A549 (cell line): ENCODE measurements at regions of chr17 and their contacts with region 1.

Region 1: GRCh38 chr17:81294856-81295680 is at the start of gene SLC38A10:
- DNase-seq: peak; percentile 87 to 100
- ATAC-seq: peak; percentile 94 to 95
- H3K4me3 ChIP-seq: peak within 1 kb of the TSS; percentile 74
- H3K27ac ChIP-seq: peak within 1 kb of the TSS; percentile 91 to 92
- H3K4me1 ChIP-seq: peaks cover 22% of the 10 kb centered on the region
- CTCF ChIP-seq: no peak; the same call in 2 of the 3 replicates
- EP300 ChIP-seq: no peak
- POLR2A ChIP-seq: peak; percentile 95
- RAD21 ChIP-seq: peak in 1 of 2 experiments; percentile 24; a peak in 1 of 5 replicates
- polyA plus RNA-seq, gene SLC38A10: 35.8 and 49.3 TPM in 2 replicates

Region 2: GRCh38 chr17:81207610-81208581 is 87.2 kb before region 1 on chr17:
- CTCF ChIA-PET with region 1: no interaction called
- POLR2A ChIA-PET with region 1: no interaction called
- DNase-seq: no peak
- ATAC-seq: no peak
- H3K4me3 ChIP-seq: no peak overlapping the region
- H3K27ac ChIP-seq: no peak overlapping the region
- H3K4me1 ChIP-seq: no peaks in the 10 kb centered on the region
- CTCF ChIP-seq: no peak
- EP300 ChIP-seq: no peak
- POLR2A ChIP-seq: no peak
- RAD21 ChIP-seq: no peak

Region 3: DNA sequence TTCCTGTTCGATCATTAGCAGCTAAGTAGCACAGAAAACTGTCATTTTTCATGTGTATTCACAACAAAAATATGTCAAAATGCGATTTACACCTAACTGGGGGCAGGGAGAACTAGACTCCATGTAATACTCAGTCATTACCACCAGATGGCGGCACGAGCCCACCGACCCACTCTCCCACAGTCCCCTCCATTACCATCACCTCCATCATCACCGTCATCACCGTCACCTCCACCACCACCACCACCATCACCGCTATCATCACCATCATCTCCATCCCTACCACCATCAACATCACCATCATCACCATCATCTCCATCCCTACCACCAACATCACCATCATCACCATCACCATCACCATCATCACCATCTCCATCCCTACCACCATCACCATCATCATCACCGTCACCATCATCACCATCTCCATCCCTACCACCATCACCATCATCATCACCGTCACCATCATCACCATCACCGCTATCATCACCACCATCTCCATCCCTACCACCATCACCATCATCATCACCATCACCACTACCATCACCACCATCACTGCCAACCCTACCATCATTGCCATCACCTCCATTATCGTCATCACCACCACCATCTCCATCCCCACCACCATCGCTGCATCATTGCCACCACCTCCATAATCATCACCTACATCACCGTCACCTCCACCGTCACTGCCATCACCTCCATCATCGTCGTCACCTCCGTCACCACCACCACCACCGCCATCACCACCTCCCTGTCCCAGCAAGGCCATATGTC is 41.5 kb before region 1 on chr17:
- CTCF ChIA-PET with region 1: interaction called, 18 read pairs
- POLR2A ChIA-PET with region 1: no interaction called
- DNase-seq: peak; percentile 43 to 62
- ATAC-seq: peak; percentile 12 to 47; a peak in 3 of 6 replicates
- H3K4me3 ChIP-seq: no peak overlapping the region
- H3K27ac ChIP-seq: no peak overlapping the region
- H3K4me1 ChIP-seq: peaks cover 18% of the 10 kb centered on the region
- CTCF ChIP-seq: peak; percentile 92
- EP300 ChIP-seq: no peak
- POLR2A ChIP-seq: no peak
- RAD21 ChIP-seq: peak; percentile 95 to 98

Region 4: DNA sequence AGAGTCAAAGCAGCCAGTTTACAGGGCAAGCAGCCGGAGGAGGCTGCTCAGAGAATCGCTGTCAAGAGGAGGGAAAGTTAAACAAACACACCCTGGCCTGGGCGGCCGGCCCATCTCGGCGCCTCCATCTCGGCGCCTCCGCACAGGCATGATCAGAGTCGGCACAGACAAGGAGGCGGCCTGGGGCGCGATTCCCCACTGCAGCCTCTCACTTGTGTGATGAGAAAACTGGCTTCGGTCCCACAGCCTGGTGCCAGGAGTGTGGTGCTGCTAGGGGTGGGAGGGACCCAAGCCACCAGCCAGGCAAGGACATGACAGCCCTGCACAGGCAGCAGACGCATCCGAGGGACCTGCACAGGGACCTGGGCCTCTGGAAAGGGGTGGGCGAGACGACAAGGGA is 17.6 kb before region 1 on chr17:
- CTCF ChIA-PET with region 1: interaction called, 22 read pairs
- POLR2A ChIA-PET with region 1: interaction called, 3 read pairs
- DNase-seq: no peak
- ATAC-seq: no peak
- H3K4me3 ChIP-seq: no peak overlapping the region
- H3K27ac ChIP-seq: no peak overlapping the region
- H3K4me1 ChIP-seq: no peaks in the 10 kb centered on the region
- CTCF ChIP-seq: no peak
- EP300 ChIP-seq: no peak
- POLR2A ChIP-seq: no peak
- RAD21 ChIP-seq: no peak

Region 5: DNA sequence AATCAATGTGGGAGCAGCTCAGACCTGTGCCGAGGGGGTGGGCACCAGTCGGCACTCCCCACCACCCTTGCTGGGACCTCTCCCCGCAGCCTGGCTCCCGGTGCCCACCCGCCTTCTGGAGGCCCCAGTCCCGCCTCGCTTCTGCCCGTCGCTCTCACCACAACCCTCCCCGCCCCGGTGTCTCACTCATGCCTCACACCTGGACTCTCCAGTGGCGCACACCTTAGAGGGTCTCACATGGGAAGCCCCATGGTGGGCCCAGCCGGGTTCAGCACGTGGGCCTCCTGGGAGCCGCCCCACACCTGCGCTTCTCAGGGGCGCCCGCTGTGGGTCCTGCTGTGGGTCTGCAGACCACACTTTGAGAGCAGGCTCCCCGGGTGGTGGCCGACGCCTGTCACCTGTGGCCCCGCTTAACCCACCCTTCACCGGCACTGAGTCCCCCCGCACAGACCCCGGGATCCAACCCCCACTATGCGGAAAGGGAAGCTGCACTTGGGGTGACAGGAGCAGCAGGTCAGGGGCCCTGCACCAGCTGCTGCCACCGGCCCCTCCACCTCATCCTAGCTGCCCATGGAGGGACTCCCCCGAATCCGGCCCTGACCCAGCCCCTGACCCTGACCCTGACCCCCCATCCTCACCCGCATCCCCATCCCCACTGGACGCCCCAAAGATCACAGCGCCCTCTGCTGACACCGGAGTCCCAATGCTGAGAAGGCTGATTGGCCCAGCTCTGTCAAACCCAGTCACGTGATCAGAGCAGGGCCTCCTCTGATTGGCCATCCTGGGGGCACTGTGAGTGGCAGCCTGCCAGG is 27.4 kb after region 1 on chr17:
- CTCF ChIA-PET with region 1: interaction called, 20 read pairs
- POLR2A ChIA-PET with region 1: interaction called, 6 read pairs
- DNase-seq: peak; percentile 72 to 89
- ATAC-seq: peak; percentile 46 to 83; a peak in 5 of 6 replicates
- H3K4me3 ChIP-seq: no peak overlapping the region
- H3K27ac ChIP-seq: no peak overlapping the region
- H3K4me1 ChIP-seq: no peaks in the 10 kb centered on the region
- CTCF ChIP-seq: peak; percentile 30
- EP300 ChIP-seq: no peak
- POLR2A ChIP-seq: no peak
- RAD21 ChIP-seq: peak in 1 of 2 experiments; percentile 29; a peak in 2 of 5 replicates

Region 6: DNA sequence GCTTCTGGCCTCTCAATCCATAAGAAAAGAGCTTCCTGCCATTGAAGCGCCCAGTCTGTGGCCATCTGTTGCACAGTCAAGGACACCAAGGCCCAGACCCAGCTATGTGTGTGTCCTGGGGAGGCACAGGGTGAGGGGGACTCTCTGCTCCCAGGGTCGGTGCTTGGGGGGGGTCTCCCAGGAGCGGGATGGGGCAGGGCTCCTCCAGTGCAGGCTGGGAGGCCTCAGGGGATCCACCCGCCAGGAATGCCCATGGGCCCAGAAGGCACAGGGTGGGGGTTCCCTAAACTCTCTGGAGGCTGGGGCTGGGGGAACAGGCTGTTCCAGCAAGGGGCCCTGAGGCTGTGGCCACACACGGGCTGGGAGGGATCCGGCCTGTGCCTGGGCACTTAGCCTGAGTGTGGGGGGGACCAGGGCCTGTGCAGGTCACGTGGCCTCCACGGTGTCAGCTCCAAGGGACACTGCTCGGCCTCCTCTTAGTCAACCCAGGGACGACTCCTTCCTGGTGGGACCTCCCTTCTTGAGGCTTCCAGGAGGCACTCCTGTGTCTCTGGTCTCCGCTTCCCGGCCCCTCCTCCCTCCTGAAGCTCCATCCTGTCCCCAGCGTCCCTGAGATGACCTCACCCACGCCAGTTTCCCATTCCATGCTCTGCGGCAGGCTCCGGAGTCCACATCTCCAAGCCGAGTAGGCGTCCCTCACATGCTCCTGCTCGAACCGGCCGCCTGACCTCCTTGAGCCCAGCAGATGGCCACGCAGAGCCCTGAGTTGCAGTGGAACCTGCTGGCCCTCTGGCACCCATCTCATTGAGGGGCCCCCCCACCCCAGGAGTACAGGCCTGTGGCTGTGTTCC is 77.1 kb after region 1 on chr17:
- CTCF ChIA-PET with region 1: interaction called, 14 read pairs
- POLR2A ChIA-PET with region 1: interaction called, 3 read pairs
- DNase-seq: peak; percentile 73 to 77
- ATAC-seq: peak; percentile 91 to 95
- H3K4me3 ChIP-seq: no peak overlapping the region
- H3K27ac ChIP-seq: peak overlapping the region; percentile 19 to 36; a peak in 2 of 6 replicates
- H3K4me1 ChIP-seq: peaks cover 5% of the 10 kb centered on the region
- CTCF ChIP-seq: peak; percentile 55
- EP300 ChIP-seq: no peak
- POLR2A ChIP-seq: no peak
- RAD21 ChIP-seq: peak; percentile 69 to 71; a peak in 4 of 5 replicates

Region 7: GRCh38 chr17:81394921-81395599 is 100.0 kb after region 1 on chr17 and contains the start of gene BAHCC1:
- CTCF ChIA-PET with region 1: interaction called, 25 read pairs
- POLR2A ChIA-PET with region 1: interaction called, 5 read pairs
- DNase-seq: peak; percentile 99 to 100
- ATAC-seq: peak; percentile 65 to 85
- H3K4me3 ChIP-seq: peak within 1 kb of the TSS; percentile 76
- H3K27ac ChIP-seq: peak within 1 kb of the TSS; percentile 94 to 98
- H3K4me1 ChIP-seq: peaks cover 40% of the 10 kb centered on the region
- CTCF ChIP-seq: no peak
- EP300 ChIP-seq: no peak
- POLR2A ChIP-seq: peak; percentile 79
- RAD21 ChIP-seq: no peak
- polyA plus RNA-seq, gene BAHCC1: 2.1 and 2.6 TPM in 2 replicates

Region 8: GRCh38 chr17:81419328-81419885 is 124.3 kb after region 1 on chr17:
- CTCF ChIA-PET with region 1: interaction called, 12 read pairs
- POLR2A ChIA-PET with region 1: no interaction called
- DNase-seq: peak; percentile 92 to 97
- ATAC-seq: peak; percentile 67 to 84
- H3K4me3 ChIP-seq: peak overlapping the region; percentile 38
- H3K27ac ChIP-seq: peak overlapping the region; percentile 98 to 100
- H3K4me1 ChIP-seq: peaks cover 77% of the 10 kb centered on the region
- CTCF ChIP-seq: no peak
- EP300 ChIP-seq: peak; percentile 18 to 36; a peak in 1 of 5 replicates
- POLR2A ChIP-seq: peak; percentile 70
- RAD21 ChIP-seq: no peak; a peak in 1 of 5 replicates

Region 9: GRCh38 chr17:82037113-82037888 is 742.2 kb after region 1 on chr17 and contains the start of gene DCXR:
- CTCF ChIA-PET with region 1: no interaction called
- POLR2A ChIA-PET with region 1: no interaction called
- DNase-seq: peak; percentile 99
- ATAC-seq: peak; percentile 89 to 96
- H3K4me3 ChIP-seq: peak within 1 kb of the TSS; percentile 52
- H3K27ac ChIP-seq: peak within 1 kb of the TSS; percentile 72 to 89
- H3K4me1 ChIP-seq: peaks cover 9% of the 10 kb centered on the region; the same call in 2 of the 3 replicates
- CTCF ChIP-seq: peak; percentile 89
- EP300 ChIP-seq: peak in 1 of 2 experiments; percentile 18; a peak in 1 of 5 replicates
- POLR2A ChIP-seq: peak; percentile 84
- RAD21 ChIP-seq: peak in 1 of 2 experiments; percentile 47; a peak in 2 of 5 replicates
- polyA plus RNA-seq, gene DCXR: 39.3 and 48.3 TPM in 2 replicates